Transverse colon (tissue), 4 donors: ENCODE measurements at regions of chr1 and their contacts with region 1.

Region 1: DNA sequence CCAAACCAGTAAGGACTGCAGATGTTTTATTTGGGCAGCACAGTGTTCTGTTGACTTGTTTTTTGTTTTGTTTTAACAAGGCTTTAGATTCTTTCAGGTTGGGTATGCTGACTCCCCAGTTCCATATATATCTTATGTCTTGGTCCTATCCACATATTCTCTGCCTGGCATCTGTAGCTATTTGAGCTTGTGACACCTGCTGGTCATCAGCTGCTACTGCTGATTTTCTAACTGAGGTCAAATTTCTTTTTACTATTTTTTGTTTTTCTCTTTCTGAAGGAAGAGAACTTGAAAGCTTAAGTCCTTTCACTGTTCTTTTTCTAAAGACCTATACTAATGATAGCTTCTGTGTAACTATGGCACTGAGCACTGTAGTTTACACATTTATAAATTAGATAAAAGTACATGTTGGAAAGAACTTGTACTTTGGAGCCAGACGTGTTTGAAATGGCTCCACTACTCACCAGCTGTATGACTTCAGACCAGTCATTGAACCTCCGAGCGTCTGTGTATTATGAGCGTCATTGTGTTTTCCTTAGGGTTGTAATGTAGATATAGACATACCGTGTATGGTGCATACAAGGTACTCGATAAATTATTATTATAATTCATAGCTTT is 109.4 kb downstream of the NRDC start:
- DNase-seq: peak; percentile 13
- H3K4me3 ChIP-seq: no peak overlapping the region
- H3K27ac ChIP-seq: peak overlapping the region in 1 of 4 donors; percentile 50
- H3K4me1 ChIP-seq: peaks cover 0 to 3% (median 0%) of the 10 kb centered on the region in 4 donors
- H3K27me3 ChIP-seq: no peaks in the 10 kb centered on the region
- CTCF ChIP-seq: peak; percentile 78 to 83 (median 81)
- EP300 ChIP-seq: no peak
- POLR2A ChIP-seq: no peak

Region 2: GRCh38 chr1:51627678-51628077 is 141.4 kb before region 1 on chr1:
- in situ Hi-C with region 1: loop called in 1 of 4 experiments (anchors 25 kb)
- intact Hi-C with region 1: no loop called
- DNase-seq: no peak
- H3K4me3 ChIP-seq: no peak overlapping the region
- H3K27ac ChIP-seq: no peak overlapping the region
- H3K4me1 ChIP-seq: peaks cover 0 to 21% (median 5%) of the 10 kb centered on the region in 4 donors
- H3K27me3 ChIP-seq: no peaks in the 10 kb centered on the region
- CTCF ChIP-seq: peak in 2 of 5 experiments; percentile 10 to 25
- EP300 ChIP-seq: no peak
- POLR2A ChIP-seq: no peak

Region 3: DNA sequence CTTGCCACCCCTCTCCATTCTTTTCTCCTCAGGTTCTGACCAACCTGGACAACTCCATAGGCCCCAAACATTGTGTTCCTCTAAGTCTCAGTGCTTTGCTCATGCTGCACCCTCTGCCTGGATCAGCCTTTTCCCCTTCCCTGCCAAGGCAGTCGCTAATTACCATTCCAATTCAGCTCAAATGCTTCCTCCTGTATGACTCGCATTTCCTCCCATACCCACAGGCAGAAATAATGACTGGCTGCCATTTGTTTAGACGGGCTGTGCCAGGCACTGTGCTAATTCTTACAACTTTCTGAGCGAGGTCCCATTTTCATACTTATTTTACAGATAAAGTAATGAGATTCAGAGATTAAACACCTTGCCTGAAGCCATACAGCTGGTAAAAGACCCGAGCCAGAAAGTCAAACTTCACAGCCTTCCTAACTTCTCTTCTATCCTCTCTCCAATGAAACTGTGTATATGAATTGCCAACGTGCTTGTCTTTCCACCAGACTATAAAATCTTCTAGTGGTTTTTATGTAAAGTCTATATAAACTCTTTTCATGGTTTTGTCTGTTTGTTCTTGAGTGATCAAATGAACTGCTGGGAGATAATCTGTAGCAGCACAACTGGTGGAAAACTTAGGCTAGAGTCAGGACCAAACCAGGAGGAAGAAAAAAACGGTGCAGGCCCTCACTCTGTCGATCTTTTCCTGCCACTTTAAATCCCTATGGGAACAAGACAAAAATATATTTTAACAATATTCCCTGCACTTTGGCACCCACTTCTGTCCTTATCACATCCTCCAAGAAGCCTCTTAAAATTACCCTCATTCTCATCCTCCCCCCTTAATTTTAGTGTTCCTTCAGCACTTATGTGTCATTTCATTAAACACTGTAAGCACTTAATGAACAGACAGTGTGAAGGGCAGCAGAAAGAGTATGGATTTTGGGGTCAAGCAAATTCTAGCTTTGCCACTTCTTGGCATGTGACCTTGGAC is 187.7 kb after region 1 on chr1:
- in situ Hi-C with region 1: no loop called
- intact Hi-C with region 1: no loop called
- DNase-seq: no peak
- H3K4me3 ChIP-seq: no peak overlapping the region
- H3K27ac ChIP-seq: peak overlapping the region in 2 of 4 donors; percentile 21 to 41
- H3K4me1 ChIP-seq: peaks cover 0 to 7% (median 2%) of the 10 kb centered on the region in 4 donors
- H3K27me3 ChIP-seq: peaks cover 8% of the 10 kb centered on the region
- CTCF ChIP-seq: no peak
- EP300 ChIP-seq: no peak
- POLR2A ChIP-seq: no peak